Dendritic cell treated with granulocyte-macrophage colony-stimulating factor and Interleukin-4, amounts not matched to agents 40 ng/mL and 50 ng/mL, for 4 days (primary cell): ENCODE measurements at regions of chr10 and their contacts with region 1.

Region 1: GRCh38 chr10:104406715-104407650 is 53.4 kb downstream of the CFAP58 start:
- H3K4me3 Mint-ChIP-seq: no peak overlapping the region
- H3K27ac Mint-ChIP-seq: no peak overlapping the region
- H3K4me1 Mint-ChIP-seq: no peaks in the 10 kb centered on the region
- H3K27me3 Mint-ChIP-seq: peaks cover 13% of the 10 kb centered on the region

Region 2: GRCh38 chr10:104359811-104360210 is 47.2 kb before region 1 on chr10:
- intact Hi-C with region 1: no loop called
- H3K4me3 Mint-ChIP-seq: no peak overlapping the region
- H3K27ac Mint-ChIP-seq: no peak overlapping the region
- H3K4me1 Mint-ChIP-seq: no peaks in the 10 kb centered on the region
- H3K27me3 Mint-ChIP-seq: peaks cover 4% of the 10 kb centered on the region

Region 3: GRCh38 chr10:104614245-104614831 is 207.4 kb after region 1 on chr10:
- intact Hi-C with region 1: loop called (anchors 1 kb)
- H3K4me3 Mint-ChIP-seq: no peak overlapping the region
- H3K27ac Mint-ChIP-seq: no peak overlapping the region
- H3K4me1 Mint-ChIP-seq: no peaks in the 10 kb centered on the region
- H3K27me3 Mint-ChIP-seq: peaks cover 9% of the 10 kb centered on the region

Region 4: DNA sequence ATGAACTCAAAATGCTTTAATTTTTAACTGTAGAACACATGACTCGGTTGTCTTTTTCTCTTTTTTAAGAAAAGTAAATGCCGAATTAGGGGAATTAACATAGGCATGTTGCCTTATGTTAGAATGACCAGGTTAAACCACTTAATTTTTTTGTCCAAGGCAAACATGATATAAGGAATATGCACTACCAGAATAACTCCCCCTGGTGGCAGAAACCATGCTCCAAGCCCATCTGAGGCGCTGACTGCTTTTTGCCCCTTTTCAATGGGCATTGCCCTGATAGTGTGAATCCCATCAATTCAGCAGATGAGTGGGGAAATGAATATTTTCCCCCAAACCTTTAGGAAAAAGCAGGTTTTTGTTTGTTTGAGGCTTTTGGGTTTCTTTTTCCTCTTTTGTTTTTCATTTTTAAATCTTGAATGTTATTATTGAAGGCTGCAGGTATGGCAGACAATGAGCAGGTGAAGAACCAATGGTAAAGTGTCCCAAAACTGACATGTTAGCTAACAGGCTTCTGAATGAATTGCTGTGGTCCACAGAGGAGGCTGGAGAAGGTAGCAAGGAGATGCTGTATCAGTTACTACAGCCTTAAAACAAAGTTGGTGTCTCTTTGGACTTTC is 518.4 kb after region 1 on chr10:
- intact Hi-C with region 1: loop called (anchors 2 kb)
- H3K4me3 Mint-ChIP-seq: no peak overlapping the region
- H3K27ac Mint-ChIP-seq: no peak overlapping the region
- H3K4me1 Mint-ChIP-seq: no peaks in the 10 kb centered on the region
- H3K27me3 Mint-ChIP-seq: no peaks in the 10 kb centered on the region